ENCODE measurements at regions of chr13 and their contacts with region 1.

Region 1: DNA sequence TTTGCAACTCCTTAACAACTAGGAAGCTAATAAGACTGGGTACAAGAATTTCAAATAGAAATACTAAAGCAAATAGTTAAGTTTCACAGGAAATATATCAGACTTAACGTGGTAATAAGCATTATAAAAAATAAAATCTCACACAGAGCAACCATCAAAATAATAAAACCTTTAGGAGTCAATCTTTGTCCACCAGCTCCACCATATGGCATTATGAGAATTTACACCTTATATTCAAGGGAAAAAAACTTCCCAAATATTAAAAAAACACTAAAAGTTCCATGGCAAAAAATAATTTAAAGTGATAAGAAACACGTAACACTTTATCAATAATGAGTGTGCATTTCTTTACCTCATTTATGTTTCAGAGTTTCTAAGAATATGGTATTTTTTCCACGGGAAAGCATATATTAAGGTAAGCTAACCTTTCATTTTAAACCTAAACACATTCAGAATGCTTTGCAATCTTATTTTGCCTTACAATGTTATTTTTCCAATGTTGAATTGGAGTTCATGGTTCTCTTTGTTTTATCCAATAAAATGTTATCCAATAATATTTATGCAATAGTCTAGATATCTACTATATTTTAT is 423.2 kb upstream of the SGCG start:
- DNase-seq: no peak
- ATAC-seq: no peak
- H3K4me3 Mint-ChIP-seq: no peak overlapping the region
- H3K27ac Mint-ChIP-seq: no peak overlapping the region
- H3K4me1 Mint-ChIP-seq: no peaks in the 10 kb centered on the region
- H3K27me3 Mint-ChIP-seq: peaks cover 2% of the 10 kb centered on the region

Region 2: DNA sequence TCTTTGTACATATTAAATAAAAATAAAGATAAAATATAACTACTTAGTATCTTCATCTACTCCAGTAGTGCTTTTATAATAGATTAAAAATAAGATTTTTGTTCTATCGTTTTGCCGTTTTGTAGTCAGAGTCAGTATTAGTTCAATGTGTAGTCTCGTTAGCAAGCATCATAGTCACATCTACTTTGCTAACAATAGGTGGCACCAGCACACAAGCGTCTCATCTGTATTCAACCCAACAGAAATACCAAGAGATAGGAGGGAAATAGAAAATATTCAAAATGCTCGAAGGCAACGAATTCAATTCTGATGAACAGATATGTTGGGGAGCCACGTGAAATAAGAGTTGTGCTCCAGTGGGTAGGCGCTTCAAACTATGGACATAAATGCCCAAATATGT is 1132.3 kb before region 1 on chr13:
- CTCF ChIA-PET with region 1: no interaction called
- POLR2A ChIA-PET with region 1: no interaction called
- intact Hi-C with region 1: loop called in 1 of 2 experiments (anchors 1 kb)
- DNase-seq: peak; percentile 25
- ATAC-seq: no peak
- H3K4me3 Mint-ChIP-seq: no peak overlapping the region
- H3K27ac Mint-ChIP-seq: no peak overlapping the region
- H3K4me1 Mint-ChIP-seq: peaks cover 2% of the 10 kb centered on the region
- H3K27me3 Mint-ChIP-seq: peaks cover 9% of the 10 kb centered on the region

Region 3: DNA sequence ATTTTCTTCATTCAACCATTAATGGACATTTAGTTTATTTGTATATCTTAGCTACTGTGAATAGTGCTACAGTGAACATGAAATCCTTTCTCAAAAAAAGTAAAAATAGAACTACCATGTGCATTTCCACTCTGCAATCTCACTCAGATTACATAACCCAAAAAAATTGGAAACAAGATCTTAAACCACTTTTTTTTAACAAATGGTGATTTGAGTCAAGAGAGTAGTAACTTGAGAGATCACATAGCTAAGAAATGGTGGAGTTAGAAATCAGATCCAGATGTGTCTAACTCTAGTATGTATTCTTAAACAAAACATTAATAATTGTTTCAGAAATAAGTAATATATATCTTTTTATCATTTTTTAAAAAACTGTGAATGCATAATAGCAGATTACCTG is 104.9 kb after region 1 on chr13:
- CTCF ChIA-PET with region 1: no interaction called
- POLR2A ChIA-PET with region 1: no interaction called
- intact Hi-C with region 1: no loop called
- DNase-seq: no peak
- ATAC-seq: no peak
- H3K4me3 Mint-ChIP-seq: no peak overlapping the region
- H3K27ac Mint-ChIP-seq: no peak overlapping the region
- H3K4me1 Mint-ChIP-seq: no peaks in the 10 kb centered on the region
- H3K27me3 Mint-ChIP-seq: no peaks in the 10 kb centered on the region

Region 4: GRCh38 chr13:23883255-23883654 is 1125.6 kb after region 1 on chr13:
- CTCF ChIA-PET with region 1: no interaction called
- POLR2A ChIA-PET with region 1: no interaction called
- intact Hi-C with region 1: no loop called
- DNase-seq: no peak
- ATAC-seq: no peak
- H3K4me3 Mint-ChIP-seq: no peak overlapping the region
- H3K27ac Mint-ChIP-seq: no peak overlapping the region
- H3K4me1 Mint-ChIP-seq: peaks cover 14% of the 10 kb centered on the region
- H3K27me3 Mint-ChIP-seq: no peaks in the 10 kb centered on the region

Measured in activated CD4-positive, alpha-beta T cell treated with anti-CD3 and anti-CD28 coated beads for 36 hours (primary cell).